Right ventricle myocardium inferior (tissue), 1 donor: ENCODE measurements at regions of chr12 and their contacts with region 1.

Region 1: GRCh38 chr12:29225834-29226233 is 76.8 kb downstream of the FAR2 start:
- DNase-seq: no peak
- ATAC-seq: no peak

Region 2: DNA sequence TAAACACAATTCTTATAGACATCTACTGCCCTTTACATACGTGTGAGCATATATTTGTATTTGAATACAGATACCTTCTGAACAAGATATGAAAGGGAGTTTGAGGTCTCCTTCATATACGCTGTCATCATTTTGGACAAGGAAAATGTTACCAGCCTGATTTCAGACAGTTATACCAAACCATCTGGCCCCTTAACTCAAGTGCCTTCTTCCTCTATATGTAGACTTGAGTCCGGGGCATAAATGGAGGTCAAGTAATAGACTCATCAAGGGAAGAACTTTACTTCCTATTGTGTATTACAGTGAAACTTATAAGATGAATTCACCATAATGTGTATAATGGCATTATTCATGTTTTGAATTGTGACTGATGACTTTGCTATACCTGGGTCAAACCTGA is 24.5 kb before region 1 on chr12:
- intact Hi-C with region 1: loop called (anchors 1 kb)
- DNase-seq: no peak
- ATAC-seq: no peak

Region 3: GRCh38 chr12:29414368-29414767 is 188.5 kb after region 1 on chr12:
- intact Hi-C with region 1: no loop called
- DNase-seq: no peak
- ATAC-seq: no peak